ENCODE measurements at regions of chr6 and their contacts with region 1.

Region 1: GRCh38 chr6:34182751-34183531 is 37.1 kb upstream of the GRM4 start:
- DNase-seq: no peak
- H3K27ac ChIP-seq: no peak overlapping the region
- CTCF ChIP-seq: no peak

Region 2: GRCh38 chr6:34027445-34027936 is 155.4 kb before region 1 on chr6:
- CTCF ChIA-PET with region 1: no interaction called
- POLR2A ChIA-PET with region 1: no interaction called
- DNase-seq: peak; percentile 52
- H3K27ac ChIP-seq: no peak overlapping the region
- CTCF ChIP-seq: peak; percentile 76

Region 3: GRCh38 chr6:35327349-35328027 is 1144.5 kb after region 1 on chr6:
- CTCF ChIA-PET with region 1: interaction called, 12 read pairs
- POLR2A ChIA-PET with region 1: no interaction called
- DNase-seq: peak; percentile 69
- H3K27ac ChIP-seq: no peak overlapping the region
- CTCF ChIP-seq: peak; percentile 55